Breast epithelium (tissue), 4 donors: ENCODE measurements at regions of chr2 and their contacts with region 1.

Region 1: GRCh38 chr2:63604666-63605065 is 15.9 kb downstream of the MDH1 start:
- DNase-seq: no peak
- H3K4me3 ChIP-seq: no peak overlapping the region
- H3K27ac ChIP-seq: no peak overlapping the region
- H3K4me1 ChIP-seq: no peaks in the 10 kb centered on the region
- H3K27me3 ChIP-seq: no peaks in the 10 kb centered on the region
- CTCF ChIP-seq: no peak
- POLR2A ChIP-seq: no peak

Region 2: GRCh38 chr2:62724886-62725711 is 879.6 kb before region 1 on chr2:
- intact Hi-C with region 1: no loop called
- DNase-seq: no peak
- H3K4me3 ChIP-seq: no peak overlapping the region
- H3K27ac ChIP-seq: no peak overlapping the region
- H3K4me1 ChIP-seq: no peaks in the 10 kb centered on the region
- H3K27me3 ChIP-seq: no peaks in the 10 kb centered on the region
- CTCF ChIP-seq: no peak
- POLR2A ChIP-seq: no peak

Region 3: GRCh38 chr2:62817995-62818713 is 786.5 kb before region 1 on chr2:
- intact Hi-C with region 1: no loop called
- DNase-seq: no peak
- H3K4me3 ChIP-seq: no peak overlapping the region
- H3K27ac ChIP-seq: no peak overlapping the region
- H3K4me1 ChIP-seq: no peaks in the 10 kb centered on the region
- H3K27me3 ChIP-seq: no peaks in the 10 kb centered on the region
- CTCF ChIP-seq: no peak
- POLR2A ChIP-seq: no peak

Region 4: GRCh38 chr2:63081404-63081803 is 523.3 kb before region 1 on chr2:
- intact Hi-C with region 1: loop called (anchors 5 kb)
- DNase-seq: no peak
- H3K4me3 ChIP-seq: no peak overlapping the region
- H3K27ac ChIP-seq: no peak overlapping the region
- H3K4me1 ChIP-seq: no peaks in the 10 kb centered on the region
- H3K27me3 ChIP-seq: no peaks in the 10 kb centered on the region
- CTCF ChIP-seq: no peak
- POLR2A ChIP-seq: no peak

Region 5: DNA sequence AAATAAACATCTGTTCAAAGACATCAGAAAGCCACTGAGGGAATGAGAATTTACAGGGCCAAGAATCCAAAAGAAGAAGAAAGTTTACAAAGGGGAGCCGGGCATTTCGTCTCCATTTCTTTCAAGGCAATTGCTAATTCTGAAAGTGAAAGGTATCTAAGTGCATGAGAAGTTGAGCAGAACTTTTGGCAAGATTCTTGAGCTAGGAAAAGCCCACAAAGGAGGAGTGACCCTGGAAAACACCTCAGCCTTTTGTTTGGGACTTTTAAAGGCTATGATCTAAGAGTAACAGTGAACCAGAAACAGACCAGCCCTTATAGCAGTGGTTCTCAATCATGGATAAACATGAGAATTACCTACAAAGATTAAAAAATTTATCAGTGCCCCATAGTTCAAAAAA is 71.5 kb after region 1 on chr2:
- intact Hi-C with region 1: no loop called
- DNase-seq: no peak
- H3K4me3 ChIP-seq: no peak overlapping the region
- H3K27ac ChIP-seq: no peak overlapping the region
- H3K4me1 ChIP-seq: no peaks in the 10 kb centered on the region
- H3K27me3 ChIP-seq: no peaks in the 10 kb centered on the region
- CTCF ChIP-seq: no peak
- POLR2A ChIP-seq: no peak